ENCODE measurements at regions of chr12 and their contacts with region 1.

Region 1: GRCh38 chr12:31406345-31406744 is 80.4 kb upstream of the SINHCAF start:
- DNase-seq: no peak
- H3K4me3 Mint-ChIP-seq: no peak overlapping the region
- H3K27ac Mint-ChIP-seq: no peak overlapping the region
- H3K4me1 Mint-ChIP-seq: no peaks in the 10 kb centered on the region
- H3K27me3 Mint-ChIP-seq: no peaks in the 10 kb centered on the region

Region 2: GRCh38 chr12:31339831-31340622 is 66.3 kb before region 1 on chr12:
- CTCF ChIA-PET with region 1: no interaction called
- POLR2A ChIA-PET with region 1: no interaction called
- intact Hi-C with region 1: no loop called
- DNase-seq: no peak
- H3K4me3 Mint-ChIP-seq: no peak overlapping the region
- H3K27ac Mint-ChIP-seq: no peak overlapping the region
- H3K4me1 Mint-ChIP-seq: no peaks in the 10 kb centered on the region
- H3K27me3 Mint-ChIP-seq: no peaks in the 10 kb centered on the region

Region 3: DNA sequence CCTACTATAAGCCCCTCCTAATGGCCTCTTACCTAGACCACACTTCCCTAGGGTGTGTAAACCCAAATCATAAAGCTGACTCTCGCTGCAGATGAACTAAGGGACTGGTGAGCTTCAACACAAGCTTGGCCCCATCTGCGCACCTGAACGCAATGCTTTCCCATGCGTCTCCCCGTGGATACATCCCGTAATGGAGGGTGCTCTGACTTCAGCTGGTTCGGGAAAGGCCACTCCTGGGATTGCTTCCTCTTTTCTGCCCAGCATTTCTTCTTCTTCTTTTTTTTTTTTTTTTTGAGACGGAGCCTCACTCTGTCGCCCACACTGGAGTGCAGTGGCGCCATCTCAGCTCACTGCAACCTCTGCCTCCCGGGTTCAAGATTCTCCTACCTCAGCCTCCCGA is 225.4 kb after region 1 on chr12:
- CTCF ChIA-PET with region 1: interaction called, 18 read pairs
- POLR2A ChIA-PET with region 1: no interaction called
- intact Hi-C with region 1: loop called (anchors 1 kb)
- DNase-seq: no peak
- H3K4me3 Mint-ChIP-seq: no peak overlapping the region
- H3K27ac Mint-ChIP-seq: no peak overlapping the region
- H3K4me1 Mint-ChIP-seq: peaks cover 4% of the 10 kb centered on the region
- H3K27me3 Mint-ChIP-seq: peaks cover 1% of the 10 kb centered on the region

Region 4: DNA sequence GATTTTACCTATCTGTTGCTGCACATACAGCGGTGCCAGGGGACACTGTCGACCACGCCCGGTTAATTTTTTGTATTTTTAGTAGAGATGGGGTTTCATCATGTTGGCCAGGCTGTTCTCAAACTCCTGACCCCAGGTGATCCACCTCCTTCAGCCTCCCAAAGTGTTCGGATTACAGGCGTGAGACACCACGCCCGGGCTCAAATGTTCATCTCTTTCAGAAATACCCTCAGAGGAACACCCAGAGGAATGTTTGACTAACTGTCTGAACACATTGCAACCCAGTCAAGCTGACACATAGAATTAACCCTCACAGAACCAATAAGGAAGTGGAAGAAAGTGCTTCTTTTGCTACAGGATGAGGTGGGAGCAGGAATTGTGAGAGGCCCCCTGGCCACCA is 238.2 kb after region 1 on chr12:
- CTCF ChIA-PET with region 1: interaction called, 29 read pairs
- POLR2A ChIA-PET with region 1: no interaction called
- intact Hi-C with region 1: no loop called
- DNase-seq: no peak
- H3K4me3 Mint-ChIP-seq: no peak overlapping the region
- H3K27ac Mint-ChIP-seq: no peak overlapping the region
- H3K4me1 Mint-ChIP-seq: no peaks in the 10 kb centered on the region
- H3K27me3 Mint-ChIP-seq: no peaks in the 10 kb centered on the region